ENCODE measurements at regions of chr7 and their contacts with region 1.

Region 1: DNA sequence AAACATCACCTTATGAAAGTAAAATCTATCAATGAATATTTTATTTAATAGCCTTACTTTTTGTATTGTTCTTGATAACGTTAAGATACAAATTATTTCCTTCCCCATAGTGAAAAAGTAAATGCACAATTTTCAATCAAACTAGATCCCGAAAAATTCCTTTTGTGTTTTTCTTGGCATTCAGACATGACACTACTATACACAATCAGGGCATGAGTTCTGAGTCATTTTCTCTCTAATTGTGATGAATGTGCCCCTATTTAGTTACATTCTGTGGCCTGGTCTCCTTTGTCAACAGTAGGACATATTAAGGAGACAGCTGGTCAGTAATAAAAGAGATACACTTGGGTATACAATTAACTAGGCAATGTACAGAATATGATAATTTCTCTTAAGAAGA is 19.8 kb downstream of the COL1A2 start:
- DNase-seq: no peak
- H3K4me3 ChIP-seq: no peak overlapping the region
- H3K27ac ChIP-seq: no peak overlapping the region
- H3K27me3 ChIP-seq: no peaks in the 10 kb centered on the region
- CTCF ChIP-seq: no peak

Region 2: DNA sequence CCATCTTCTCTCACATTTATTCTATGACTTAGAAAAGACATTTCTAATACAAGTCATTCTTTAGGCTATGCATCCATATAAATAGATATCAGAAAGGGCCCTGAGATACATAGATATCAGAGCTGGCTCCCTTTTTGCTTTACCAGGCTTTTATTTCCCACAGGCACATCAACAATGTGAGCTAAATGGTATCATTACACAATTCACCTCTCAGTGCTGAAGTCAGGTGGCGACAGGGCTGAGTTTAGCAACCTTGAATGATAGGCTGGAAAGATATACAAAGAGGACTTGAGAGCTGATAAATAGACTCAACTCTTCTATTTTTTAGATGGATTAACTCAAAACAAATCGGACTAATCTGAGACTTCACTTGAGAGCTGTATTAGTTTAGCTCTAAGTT is 209.0 kb before region 1 on chr7:
- CTCF ChIA-PET with region 1: no interaction called
- POLR2A ChIA-PET with region 1: no interaction called
- DNase-seq: no peak
- H3K4me3 ChIP-seq: no peak overlapping the region
- H3K27ac ChIP-seq: no peak overlapping the region
- H3K27me3 ChIP-seq: no peaks in the 10 kb centered on the region
- CTCF ChIP-seq: no peak

Region 3: GRCh38 chr7:94400643-94401427 is 13.6 kb before region 1 on chr7:
- CTCF ChIA-PET with region 1: no interaction called
- POLR2A ChIA-PET with region 1: interaction called, 13 read pairs
- DNase-seq: no peak
- H3K4me3 ChIP-seq: peak overlapping the region; percentile 96
- H3K27ac ChIP-seq: peak overlapping the region; percentile 66
- H3K27me3 ChIP-seq: no peaks in the 10 kb centered on the region
- CTCF ChIP-seq: no peak

Region 4: GRCh38 chr7:94492596-94492995 is 78.1 kb after region 1 on chr7:
- CTCF ChIA-PET with region 1: no interaction called
- POLR2A ChIA-PET with region 1: no interaction called
- DNase-seq: no peak
- H3K4me3 ChIP-seq: no peak overlapping the region
- H3K27ac ChIP-seq: no peak overlapping the region
- H3K27me3 ChIP-seq: peaks cover 3% of the 10 kb centered on the region
- CTCF ChIP-seq: no peak